ENCODE measurements at regions of chr12 and their contacts with region 1.

Region 1: GRCh38 chr12:116358536-116358892 is 81.0 kb upstream of the MED13L start:
- DNase-seq: no peak
- ATAC-seq: peak in 1 of 2 donors; percentile 14
- H3K4me3 Mint-ChIP-seq: peak overlapping the region in 9 of 10 donors; percentile 17 to 86 (median 77)
- H3K27ac Mint-ChIP-seq: peak overlapping the region; percentile 49 to 92 (median 86)
- H3K4me1 Mint-ChIP-seq: peaks cover 15 to 39% (median 34%) of the 10 kb centered on the region in 4 donors
- H3K27me3 Mint-ChIP-seq: no peaks in the 10 kb centered on the region

Region 2: DNA sequence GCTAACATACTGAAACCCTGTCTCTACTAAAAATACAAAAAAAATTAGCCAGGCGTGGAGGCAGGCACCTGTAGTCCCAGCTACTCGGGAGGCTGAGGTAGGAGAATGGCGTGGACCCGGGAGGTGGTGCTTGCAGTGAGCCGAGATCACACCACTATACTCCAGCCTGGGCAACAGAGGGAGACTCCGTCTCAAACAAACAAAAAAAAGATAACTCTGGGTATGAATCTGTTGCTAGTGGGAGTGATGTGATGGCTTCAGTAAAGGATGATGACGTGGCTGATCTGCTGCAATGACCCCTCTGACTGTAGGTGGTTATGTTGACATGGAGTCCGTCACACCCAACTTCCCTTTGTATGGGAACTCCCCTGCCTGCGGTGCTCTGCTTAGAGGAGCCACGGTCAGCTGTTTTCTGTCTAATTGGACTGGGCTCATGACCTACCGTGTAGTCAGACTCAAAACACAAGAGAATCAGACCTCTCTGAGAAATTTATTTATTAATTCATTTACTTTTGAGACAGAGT is 21.9 kb before region 1 on chr12:
- POLR2A ChIA-PET with region 1: no interaction called
- DNase-seq: no peak
- ATAC-seq: peak in 1 of 2 donors; percentile 62
- H3K4me3 Mint-ChIP-seq: no peak overlapping the region
- H3K27ac Mint-ChIP-seq: peak overlapping the region in 2 of 10 donors; percentile 40 to 60
- H3K4me1 Mint-ChIP-seq: peaks cover 0 to 42% (median 0%) of the 10 kb centered on the region in 4 donors
- H3K27me3 Mint-ChIP-seq: no peaks in the 10 kb centered on the region

Region 3: GRCh38 chr12:116369921-116370404 is 11.4 kb after region 1 on chr12:
- POLR2A ChIA-PET with region 1: interaction called, 10 read pairs
- DNase-seq: no peak
- ATAC-seq: no peak
- H3K4me3 Mint-ChIP-seq: no peak overlapping the region
- H3K27ac Mint-ChIP-seq: no peak overlapping the region
- H3K4me1 Mint-ChIP-seq: peaks cover 0 to 4% (median under 1%) of the 10 kb centered on the region in 4 donors
- H3K27me3 Mint-ChIP-seq: no peaks in the 10 kb centered on the region